Activated CD4-positive, alpha-beta T cell treated with anti-CD3 and anti-CD28 coated beads, Interleukin-2, amount 10 ng/mL, durations not matched to agents 7 days and 5 days (primary cell): ENCODE measurements at regions of chr13 and their contacts with region 1.

Region 1: DNA sequence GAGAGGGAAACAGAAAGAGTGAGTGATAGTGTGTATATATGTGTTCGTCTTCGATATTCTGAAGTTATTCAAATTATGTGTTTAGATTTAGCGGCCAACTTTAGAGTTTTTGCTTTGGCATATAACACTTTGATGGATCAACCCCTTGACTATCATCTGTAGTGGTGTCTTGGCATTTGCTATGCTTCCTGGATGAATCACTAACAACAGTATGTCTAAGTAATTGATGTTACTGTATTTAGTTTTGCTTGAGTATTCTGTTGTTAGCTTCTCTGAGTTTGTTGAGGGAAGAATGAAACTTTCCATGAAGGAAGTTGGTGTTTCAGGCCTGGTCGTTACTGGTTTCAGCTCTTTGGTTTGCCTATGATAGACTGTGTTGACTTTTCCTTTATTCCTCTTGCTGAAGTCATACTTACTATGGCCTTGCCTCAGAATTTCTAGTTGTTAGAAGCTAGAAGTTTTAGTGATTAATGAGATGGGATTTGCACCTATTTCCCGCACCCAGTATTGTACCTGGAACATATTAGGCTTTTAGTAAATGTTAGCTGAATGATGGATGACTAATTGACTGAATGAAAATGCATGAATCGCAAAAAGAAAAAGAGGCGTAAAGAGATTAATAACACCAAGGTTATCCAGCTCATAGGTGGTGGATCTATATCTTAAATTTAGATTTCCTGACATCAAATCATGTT is 20.7 kb downstream of the NDFIP2 start:
- DNase-seq: no peak
- H3K4me3 Mint-ChIP-seq: peak overlapping the region; percentile 3
- H3K27ac Mint-ChIP-seq: no peak overlapping the region
- H3K4me1 Mint-ChIP-seq: peaks cover 66% of the 10 kb centered on the region
- H3K27me3 Mint-ChIP-seq: no peaks in the 10 kb centered on the region

Region 2: GRCh38 chr13:79267560-79267959 is 234.1 kb before region 1 on chr13:
- CTCF ChIA-PET with region 1: no interaction called
- POLR2A ChIA-PET with region 1: no interaction called
- DNase-seq: no peak
- H3K4me3 Mint-ChIP-seq: no peak overlapping the region
- H3K27ac Mint-ChIP-seq: no peak overlapping the region
- H3K4me1 Mint-ChIP-seq: no peaks in the 10 kb centered on the region
- H3K27me3 Mint-ChIP-seq: peaks cover 23% of the 10 kb centered on the region

Region 3: DNA sequence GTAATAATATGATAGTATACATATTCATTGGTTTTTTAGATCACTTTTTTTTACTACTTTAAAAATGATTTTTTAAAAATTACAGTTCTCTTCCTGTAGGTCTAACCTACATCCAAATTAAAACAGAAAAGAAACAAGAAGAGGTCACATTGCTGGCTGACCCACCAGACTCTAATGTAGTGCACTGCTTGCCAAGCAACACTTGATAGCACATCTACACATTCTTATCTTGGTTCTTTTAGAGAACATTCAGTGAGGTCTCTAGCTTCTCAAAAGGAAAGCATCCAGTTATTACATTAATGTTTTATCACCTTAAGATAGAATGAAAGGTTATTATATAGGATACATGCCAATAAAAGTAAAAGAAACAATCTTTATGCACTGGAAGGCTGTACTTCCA is 14.9 kb after region 1 on chr13:
- CTCF ChIA-PET with region 1: interaction called, 28 read pairs
- POLR2A ChIA-PET with region 1: no interaction called
- DNase-seq: no peak
- H3K4me3 Mint-ChIP-seq: no peak overlapping the region
- H3K27ac Mint-ChIP-seq: no peak overlapping the region
- H3K4me1 Mint-ChIP-seq: peaks cover 52% of the 10 kb centered on the region
- H3K27me3 Mint-ChIP-seq: no peaks in the 10 kb centered on the region